ENCODE measurements at regions of chr7 and their contacts with region 1.

Region 1: DNA sequence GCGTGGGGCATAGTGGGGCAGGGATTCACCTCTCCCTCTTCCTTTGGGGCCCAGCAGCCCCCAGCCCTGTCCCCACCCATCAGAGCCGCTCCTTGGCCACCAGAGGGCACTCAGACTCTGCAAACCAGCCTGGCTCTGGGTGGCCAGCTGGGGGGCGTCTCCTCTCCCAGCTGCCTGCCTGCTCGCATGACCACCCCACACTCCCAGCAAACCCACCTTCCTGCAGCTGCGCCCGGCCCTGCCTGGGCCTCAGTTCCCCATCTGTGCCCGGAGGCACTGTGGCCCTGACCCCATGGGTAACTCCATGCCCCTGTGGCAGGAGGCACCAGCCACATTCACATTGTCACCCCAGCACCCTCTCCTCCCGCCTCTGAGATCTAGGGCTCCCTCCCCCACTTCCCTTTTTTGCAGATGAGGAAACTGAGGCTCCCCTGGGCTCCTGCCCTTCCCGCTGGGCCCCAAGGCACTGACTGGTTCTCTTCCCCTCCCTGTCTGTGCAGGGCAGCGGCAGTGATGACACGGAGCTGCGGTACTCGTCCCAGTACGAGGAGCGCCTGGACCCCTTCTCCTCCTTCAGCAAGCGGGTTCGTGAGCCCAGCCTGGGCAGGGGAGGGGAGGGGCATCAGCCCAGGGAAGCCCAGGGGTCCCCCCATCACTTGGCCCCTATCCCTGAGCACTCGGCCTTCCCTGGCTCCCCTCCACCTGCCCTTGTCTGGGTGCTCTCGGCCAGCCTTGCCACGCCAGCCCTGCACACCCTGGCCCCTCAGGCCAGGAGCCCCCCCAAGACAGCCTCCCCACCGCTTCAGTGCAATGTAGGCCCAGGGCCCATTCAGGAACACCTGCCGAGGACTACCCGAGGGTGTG is 6.9 kb upstream of the SH2B2 start:
- DNase-seq: peak; percentile 60
- H3K4me3 Mint-ChIP-seq: no peak overlapping the region
- H3K27ac Mint-ChIP-seq: no peak overlapping the region
- H3K4me1 Mint-ChIP-seq: peaks cover 12% of the 10 kb centered on the region
- H3K27me3 Mint-ChIP-seq: peaks cover 7% of the 10 kb centered on the region

Region 2: GRCh38 chr7:102140952-102141370 is 138.8 kb before region 1 on chr7:
- CTCF ChIA-PET with region 1: no interaction called
- POLR2A ChIA-PET with region 1: no interaction called
- DNase-seq: no peak
- H3K4me3 Mint-ChIP-seq: peak overlapping the region; percentile 12
- H3K27ac Mint-ChIP-seq: peak overlapping the region; percentile 60
- H3K4me1 Mint-ChIP-seq: peaks cover 9% of the 10 kb centered on the region
- H3K27me3 Mint-ChIP-seq: no peaks in the 10 kb centered on the region

Region 3: GRCh38 chr7:102260856-102261255 is 18.9 kb before region 1 on chr7:
- CTCF ChIA-PET with region 1: no interaction called
- POLR2A ChIA-PET with region 1: no interaction called
- DNase-seq: no peak
- H3K4me3 Mint-ChIP-seq: no peak overlapping the region
- H3K27ac Mint-ChIP-seq: no peak overlapping the region
- H3K4me1 Mint-ChIP-seq: no peaks in the 10 kb centered on the region
- H3K27me3 Mint-ChIP-seq: no peaks in the 10 kb centered on the region

Region 4: GRCh38 chr7:102390697-102391484 is 111.1 kb after region 1 on chr7:
- CTCF ChIA-PET with region 1: interaction called, 30 read pairs
- POLR2A ChIA-PET with region 1: interaction called, 3 read pairs
- DNase-seq: peak; percentile 73
- H3K4me3 Mint-ChIP-seq: no peak overlapping the region
- H3K27ac Mint-ChIP-seq: no peak overlapping the region
- H3K4me1 Mint-ChIP-seq: peaks cover 5% of the 10 kb centered on the region
- H3K27me3 Mint-ChIP-seq: no peaks in the 10 kb centered on the region

Measured in activated CD4-positive, alpha-beta memory T cell treated with anti-CD3 and anti-CD28 coated beads, Interleukin-2, amount 10 ng/mL, durations not matched to agents 7 days and 5 days (primary cell).